MCF 10A (cell line): ENCODE measurements at regions of chr15 and their contacts with region 1.

Region 1: DNA sequence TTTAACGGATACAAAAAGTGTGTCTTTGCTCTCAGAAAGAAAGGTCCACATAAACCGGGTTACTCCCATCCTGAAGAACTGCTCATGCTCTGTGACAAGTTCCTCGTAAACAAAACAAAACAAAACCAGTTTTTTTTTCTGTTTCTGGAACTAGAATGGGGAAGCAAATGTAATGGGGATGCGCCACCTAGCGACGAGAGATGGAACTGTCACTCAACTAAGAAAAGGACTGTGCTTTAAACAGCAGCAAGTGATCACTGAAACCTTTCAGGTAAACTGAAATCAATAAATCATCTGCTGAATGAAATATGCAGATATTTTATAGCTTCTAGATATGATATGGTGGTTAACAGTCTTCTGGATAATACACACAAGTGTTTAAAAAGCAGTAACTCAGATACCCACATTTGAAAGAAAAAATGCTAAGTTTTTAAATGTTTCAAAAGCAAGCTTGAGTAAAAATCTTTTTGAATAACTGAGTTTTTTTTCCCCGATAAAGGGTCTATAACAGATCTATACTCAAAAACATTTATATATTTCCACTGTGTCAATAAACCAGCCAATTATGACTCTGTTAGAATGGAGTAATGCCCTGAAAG is 10.9 kb downstream of the TM2D3 start:
- DNase-seq: peak; percentile 71
- H3K4me3 Mint-ChIP-seq: no peak overlapping the region
- H3K27ac Mint-ChIP-seq: peak overlapping the region; percentile 27
- H3K4me1 Mint-ChIP-seq: peaks cover 28% of the 10 kb centered on the region
- H3K27me3 Mint-ChIP-seq: no peaks in the 10 kb centered on the region
- CTCF ChIP-seq: peak; percentile 89

Region 2: GRCh38 chr15:101307048-101307896 is 334.0 kb before region 1 on chr15:
- CTCF ChIA-PET with region 1: interaction called, 320 read pairs
- POLR2A ChIA-PET with region 1: interaction called, 7 read pairs
- intact Hi-C with region 1: no loop called
- DNase-seq: no peak
- H3K4me3 Mint-ChIP-seq: no peak overlapping the region
- H3K27ac Mint-ChIP-seq: no peak overlapping the region
- H3K4me1 Mint-ChIP-seq: no peaks in the 10 kb centered on the region
- H3K27me3 Mint-ChIP-seq: no peaks in the 10 kb centered on the region
- CTCF ChIP-seq: no peak

Region 3: GRCh38 chr15:101320501-101321052 is 320.7 kb before region 1 on chr15:
- CTCF ChIA-PET with region 1: interaction called, 32 read pairs
- POLR2A ChIA-PET with region 1: interaction called, 3 read pairs
- intact Hi-C with region 1: no loop called
- DNase-seq: no peak
- H3K4me3 Mint-ChIP-seq: no peak overlapping the region
- H3K27ac Mint-ChIP-seq: no peak overlapping the region
- H3K4me1 Mint-ChIP-seq: peaks cover 14% of the 10 kb centered on the region
- H3K27me3 Mint-ChIP-seq: no peaks in the 10 kb centered on the region
- CTCF ChIP-seq: no peak

Region 4: DNA sequence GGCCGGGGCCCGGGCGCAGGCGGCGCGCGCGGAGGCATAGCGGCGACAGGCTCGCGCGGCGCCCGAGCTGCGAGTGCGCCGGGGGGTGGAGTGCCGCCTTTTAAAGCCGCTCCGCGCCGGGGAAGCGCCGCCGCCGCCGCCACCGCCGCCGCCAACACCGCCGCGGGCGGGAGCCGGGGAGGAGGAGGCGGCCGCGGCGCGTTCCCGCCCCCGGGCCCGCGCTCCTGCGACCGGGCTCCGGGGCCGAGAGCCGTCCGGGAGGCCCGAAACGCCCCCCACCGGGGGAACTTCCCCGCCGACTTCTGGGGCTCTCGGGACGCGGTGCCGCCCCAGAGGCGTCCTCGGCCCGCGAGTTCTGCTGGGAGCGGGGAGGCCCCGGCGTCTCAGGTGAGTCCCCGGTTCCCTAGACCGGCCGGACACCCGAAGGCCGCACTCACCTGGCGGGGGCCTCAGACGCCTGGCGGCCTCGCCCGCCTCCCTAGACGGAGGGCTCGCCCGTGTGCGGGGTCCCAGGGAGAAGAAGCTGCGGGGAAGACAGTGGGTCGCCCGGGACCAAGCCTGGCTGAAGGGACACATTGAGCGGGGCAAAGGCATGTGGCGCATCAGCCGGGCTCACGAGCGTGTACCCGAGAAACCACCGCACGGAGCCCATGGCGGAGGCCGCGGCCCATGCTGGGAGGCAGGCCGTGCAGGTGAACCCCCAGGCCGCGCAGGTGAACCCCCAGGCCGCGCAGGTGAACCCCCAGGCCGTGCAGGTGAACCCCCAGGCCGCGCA is 151.4 kb before region 1 on chr15 and contains the start of gene PCSK6:
- CTCF ChIA-PET with region 1: interaction called, 4 read pairs
- POLR2A ChIA-PET with region 1: interaction called, 3 read pairs
- intact Hi-C with region 1: loop called (anchors 5 kb)
- DNase-seq: peak; percentile 28
- H3K4me3 Mint-ChIP-seq: peak within 1 kb of the TSS; percentile 54
- H3K27ac Mint-ChIP-seq: no peak within 1 kb of the TSS
- H3K4me1 Mint-ChIP-seq: no peaks in the 10 kb centered on the region
- H3K27me3 Mint-ChIP-seq: peaks cover 10% of the 10 kb centered on the region
- CTCF ChIP-seq: no peak
- total RNA-seq, gene PCSK6: 29.8 and 30.8 TPM in 2 replicates

Region 5: GRCh38 chr15:101540480-101541239 is 100.6 kb before region 1 on chr15:
- CTCF ChIA-PET with region 1: no interaction called
- POLR2A ChIA-PET with region 1: no interaction called
- intact Hi-C with region 1: loop called (anchors 1 kb)
- DNase-seq: peak; percentile 29
- H3K4me3 Mint-ChIP-seq: no peak overlapping the region
- H3K27ac Mint-ChIP-seq: no peak overlapping the region
- H3K4me1 Mint-ChIP-seq: no peaks in the 10 kb centered on the region
- H3K27me3 Mint-ChIP-seq: peaks cover 29% of the 10 kb centered on the region
- CTCF ChIP-seq: peak; percentile 5

Region 6: DNA sequence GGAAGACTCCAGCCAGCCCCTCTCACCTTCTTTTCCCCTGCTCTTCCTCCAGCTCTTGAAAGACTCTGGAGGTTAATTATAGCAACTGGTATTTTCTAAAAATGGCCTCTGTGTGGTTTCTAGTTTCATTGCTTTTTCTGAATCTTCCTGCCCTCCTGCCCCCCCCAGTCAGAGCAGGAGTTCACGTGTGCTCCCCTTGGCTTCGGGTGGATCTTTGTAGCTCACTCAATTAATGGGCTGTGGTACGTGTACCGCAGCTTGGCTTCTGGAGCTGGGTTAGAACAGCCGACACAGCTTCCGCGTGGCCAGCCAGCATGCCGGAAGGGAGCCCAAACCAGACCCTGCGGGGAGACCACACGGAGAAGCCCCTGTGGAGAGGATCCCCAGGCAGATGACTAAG is 20.6 kb before region 1 on chr15:
- CTCF ChIA-PET with region 1: interaction called, 10 read pairs
- POLR2A ChIA-PET with region 1: interaction called, 5 read pairs
- intact Hi-C with region 1: no loop called
- DNase-seq: no peak
- H3K4me3 Mint-ChIP-seq: no peak overlapping the region
- H3K27ac Mint-ChIP-seq: no peak overlapping the region
- H3K4me1 Mint-ChIP-seq: peaks cover 12% of the 10 kb centered on the region
- H3K27me3 Mint-ChIP-seq: no peaks in the 10 kb centered on the region
- CTCF ChIP-seq: no peak

Region 7: DNA sequence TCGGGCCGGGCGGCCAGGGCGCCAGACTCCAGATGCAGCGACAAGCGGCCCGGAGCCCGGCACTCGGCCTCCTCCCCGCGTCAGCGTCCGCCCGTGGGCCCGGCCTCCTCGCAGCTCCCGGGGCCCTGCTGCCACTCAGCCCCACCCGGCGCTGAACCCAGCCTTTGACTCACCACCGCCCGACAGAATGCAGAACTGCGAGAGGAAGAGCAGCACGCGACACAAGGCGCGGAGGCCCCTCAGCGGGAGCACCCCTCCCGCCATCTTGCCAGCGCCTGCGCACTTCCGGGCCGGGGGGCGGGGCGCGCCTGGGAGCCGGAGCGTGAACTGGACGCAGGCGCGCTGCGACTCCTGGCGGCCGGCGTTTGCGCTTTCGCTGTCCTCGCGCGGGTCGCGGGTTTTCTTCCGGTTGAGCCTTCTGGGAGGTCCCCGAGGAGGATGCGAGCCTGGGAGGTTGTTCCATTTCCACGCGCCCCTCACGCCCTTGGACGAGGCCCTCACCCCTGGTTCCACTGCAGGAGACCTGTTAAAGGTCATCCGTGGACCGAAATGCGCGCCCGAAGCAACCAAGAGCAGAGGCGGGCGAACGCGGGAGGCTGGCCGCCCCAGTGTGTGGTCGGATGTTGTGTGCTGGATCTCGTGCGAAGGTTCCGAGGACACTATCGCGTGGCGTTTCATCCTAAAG is 11.0 kb after region 1 on chr15 and contains the start of gene TM2D3:
- CTCF ChIA-PET with region 1: interaction called, 16 read pairs
- POLR2A ChIA-PET with region 1: interaction called, 3 read pairs
- intact Hi-C with region 1: no loop called
- DNase-seq: peak; percentile 90
- H3K4me3 Mint-ChIP-seq: peak within 1 kb of the TSS; percentile 71
- H3K27ac Mint-ChIP-seq: peak within 1 kb of the TSS; percentile 60
- H3K4me1 Mint-ChIP-seq: no peaks in the 10 kb centered on the region
- H3K27me3 Mint-ChIP-seq: no peaks in the 10 kb centered on the region
- CTCF ChIP-seq: peak; percentile 71
- total RNA-seq, gene TM2D3: 25.7 and 26.2 TPM in 2 replicates

Region 8: DNA sequence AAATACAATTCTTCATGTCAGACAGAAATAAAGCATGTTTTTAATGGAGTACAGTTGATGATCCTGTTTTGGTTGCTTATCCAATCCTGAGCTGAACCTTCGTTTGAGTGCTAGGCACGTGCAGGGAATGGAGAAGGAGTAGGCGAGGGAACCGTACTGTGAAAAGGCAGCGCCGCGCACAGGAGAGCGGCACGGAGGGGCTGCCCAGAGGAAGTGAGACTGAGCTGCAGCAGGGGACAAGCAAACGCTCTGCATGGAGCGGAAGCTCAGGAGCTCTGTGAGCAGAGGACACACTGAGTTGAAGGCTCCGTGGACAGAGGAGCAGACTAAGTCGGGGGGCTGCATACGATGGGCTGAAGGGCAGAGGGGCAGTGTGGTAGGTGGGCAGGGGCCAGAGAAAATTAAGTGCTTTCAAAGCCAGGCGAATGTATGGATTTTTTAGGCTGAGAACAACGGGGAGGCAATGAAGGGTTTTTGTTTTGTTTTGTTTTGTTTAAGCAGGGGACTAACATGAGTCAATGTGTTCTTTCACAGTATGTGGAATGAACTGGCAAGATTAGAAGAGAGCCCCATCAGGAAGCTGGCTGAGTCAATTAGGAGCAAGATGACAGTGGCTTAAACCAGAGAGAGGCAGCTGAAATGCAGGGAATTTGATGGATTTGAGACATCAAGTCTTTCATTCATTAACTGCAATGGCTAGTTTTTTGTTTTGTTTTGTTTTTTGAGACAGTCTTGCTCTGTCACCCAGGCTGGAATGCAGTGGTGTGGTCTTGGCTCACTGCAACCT is 34.7 kb after region 1 on chr15:
- CTCF ChIA-PET with region 1: no interaction called
- POLR2A ChIA-PET with region 1: no interaction called
- intact Hi-C with region 1: no loop called
- DNase-seq: peak; percentile 31
- H3K4me3 Mint-ChIP-seq: no peak overlapping the region
- H3K27ac Mint-ChIP-seq: no peak overlapping the region
- H3K4me1 Mint-ChIP-seq: peaks cover 19% of the 10 kb centered on the region
- H3K27me3 Mint-ChIP-seq: no peaks in the 10 kb centered on the region
- CTCF ChIP-seq: no peak